Activated naive CD4-positive, alpha-beta T cell treated with anti-CD3 and anti-CD28 coated beads for 36 hours (primary cell): ENCODE measurements at regions of chr13 and their contacts with region 1.

Region 1: GRCh38 chr13:45047394-45048310 is 58.3 kb downstream of the GPALPP1 start:
- DNase-seq: peak; percentile 91
- H3K4me3 Mint-ChIP-seq: peak overlapping the region; percentile 65
- H3K27ac Mint-ChIP-seq: no peak overlapping the region
- H3K4me1 Mint-ChIP-seq: peaks cover 21% of the 10 kb centered on the region
- H3K27me3 Mint-ChIP-seq: peaks cover 25% of the 10 kb centered on the region

Region 2: DNA sequence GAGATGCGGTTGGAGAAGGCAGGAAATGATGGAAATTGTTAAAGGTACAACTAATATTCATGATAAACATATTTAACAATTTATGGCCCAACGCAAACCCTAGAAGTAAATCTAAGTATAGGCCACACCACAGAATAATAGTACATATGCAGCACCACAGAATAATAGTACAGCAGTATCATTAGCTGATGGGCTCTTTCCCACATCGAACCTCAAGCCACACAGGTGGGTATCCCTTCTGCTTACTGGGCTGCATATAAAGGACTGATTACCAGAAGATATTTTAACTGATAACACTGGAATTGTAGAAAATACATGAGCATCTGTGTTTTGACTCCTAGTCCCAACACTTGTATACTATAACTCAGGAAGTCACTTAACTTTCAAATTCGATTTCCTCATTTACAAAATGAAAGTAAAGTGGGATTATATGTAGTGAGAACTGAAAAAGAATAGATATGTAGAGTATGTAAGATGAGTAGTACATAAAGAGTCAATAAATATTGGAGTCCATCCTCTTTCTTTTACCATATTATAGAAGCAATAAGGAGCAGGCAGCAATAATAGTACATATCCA is 563.0 kb before region 1 on chr13:
- CTCF ChIA-PET with region 1: interaction called, 5 read pairs
- intact Hi-C with region 1: loop called (anchors 2 kb)
- DNase-seq: no peak
- H3K4me3 Mint-ChIP-seq: peak overlapping the region; percentile 50
- H3K27ac Mint-ChIP-seq: no peak overlapping the region
- H3K4me1 Mint-ChIP-seq: peaks cover 9% of the 10 kb centered on the region
- H3K27me3 Mint-ChIP-seq: no peaks in the 10 kb centered on the region

Region 3: GRCh38 chr13:45142440-45143345 is 95.0 kb after region 1 on chr13:
- CTCF ChIA-PET with region 1: interaction called, 10 read pairs
- intact Hi-C with region 1: no loop called
- DNase-seq: no peak
- H3K4me3 Mint-ChIP-seq: no peak overlapping the region
- H3K27ac Mint-ChIP-seq: no peak overlapping the region
- H3K4me1 Mint-ChIP-seq: peaks cover 13% of the 10 kb centered on the region
- H3K27me3 Mint-ChIP-seq: no peaks in the 10 kb centered on the region

Region 4: DNA sequence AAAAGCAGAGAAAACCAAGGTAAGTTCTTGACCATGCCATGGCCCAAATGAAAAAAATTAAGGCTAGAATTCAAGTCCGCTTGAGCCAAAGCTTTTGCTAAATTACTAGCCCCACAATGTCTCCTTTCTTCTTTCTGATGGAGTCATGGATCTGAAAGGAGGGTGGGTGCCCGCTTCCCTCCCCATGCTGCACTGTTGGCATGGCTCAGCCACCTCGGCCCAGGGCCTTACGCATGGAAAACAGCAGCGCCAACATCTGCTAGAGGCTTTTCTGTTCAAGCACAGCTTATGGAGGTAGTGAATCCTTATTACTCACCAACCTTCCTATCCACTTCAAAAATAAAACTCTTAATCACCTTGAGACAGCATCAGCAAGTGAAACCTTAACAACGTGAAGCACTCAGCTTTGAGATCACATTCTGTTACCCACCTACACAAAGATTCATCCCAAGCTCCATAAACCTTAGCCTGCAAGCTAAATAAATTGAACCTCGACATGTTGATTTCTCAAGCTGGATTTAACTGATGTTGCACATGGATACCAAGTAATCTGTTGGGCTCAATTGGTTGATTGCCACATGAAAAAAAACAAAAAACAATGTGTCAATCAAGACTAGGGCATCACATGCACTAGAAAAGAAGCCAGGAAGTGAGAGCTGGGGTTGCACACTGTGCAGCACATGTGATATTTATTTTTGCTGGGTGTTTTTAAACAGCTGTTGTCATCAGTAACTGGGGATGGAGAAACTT is 250.0 kb after region 1 on chr13:
- CTCF ChIA-PET with region 1: interaction called, 132 read pairs
- intact Hi-C with region 1: no loop called
- DNase-seq: peak; percentile 49
- H3K4me3 Mint-ChIP-seq: no peak overlapping the region
- H3K27ac Mint-ChIP-seq: peak overlapping the region; percentile 84
- H3K4me1 Mint-ChIP-seq: peaks cover 39% of the 10 kb centered on the region
- H3K27me3 Mint-ChIP-seq: peaks cover 2% of the 10 kb centered on the region

Region 5: DNA sequence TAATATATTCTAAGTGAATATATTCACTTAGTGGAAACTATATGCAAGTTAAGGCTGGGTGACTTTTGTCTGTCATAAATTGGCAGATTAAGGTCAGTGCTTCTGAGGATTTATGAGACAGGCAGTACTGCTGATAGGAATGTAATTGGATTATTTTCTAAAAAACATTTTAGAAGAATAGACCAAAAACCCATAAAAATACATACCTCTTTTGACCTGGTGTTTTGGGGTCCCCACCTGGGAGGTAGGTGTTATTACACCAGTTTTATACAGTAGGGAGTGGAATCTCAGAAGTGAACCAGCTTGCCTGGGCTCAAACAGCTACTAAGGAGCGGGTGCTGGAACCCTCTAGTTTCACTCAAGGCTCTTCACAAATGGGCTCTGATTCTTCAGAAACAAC is 442.4 kb after region 1 on chr13:
- CTCF ChIA-PET with region 1: no interaction called
- intact Hi-C with region 1: loop called (anchors 2 kb)
- DNase-seq: peak; percentile 33
- H3K4me3 Mint-ChIP-seq: no peak overlapping the region
- H3K27ac Mint-ChIP-seq: no peak overlapping the region
- H3K4me1 Mint-ChIP-seq: peaks cover 3% of the 10 kb centered on the region
- H3K27me3 Mint-ChIP-seq: no peaks in the 10 kb centered on the region